Activated naive CD4-positive, alpha-beta T cell treated with anti-CD3 and anti-CD28 coated beads for 36 hours (primary cell): ENCODE measurements at regions of chr3 and their contacts with region 1.

Region 1: GRCh38 chr3:180679178-180680096 is at the start of gene CCDC39:
- DNase-seq: peak; percentile 74
- H3K4me3 Mint-ChIP-seq: peak within 1 kb of the TSS; percentile 83
- H3K27ac Mint-ChIP-seq: no peak within 1 kb of the TSS
- H3K4me1 Mint-ChIP-seq: peaks cover 11% of the 10 kb centered on the region
- H3K27me3 Mint-ChIP-seq: peaks cover 40% of the 10 kb centered on the region
- total RNA-seq, gene CCDC39: not detected

Region 2: DNA sequence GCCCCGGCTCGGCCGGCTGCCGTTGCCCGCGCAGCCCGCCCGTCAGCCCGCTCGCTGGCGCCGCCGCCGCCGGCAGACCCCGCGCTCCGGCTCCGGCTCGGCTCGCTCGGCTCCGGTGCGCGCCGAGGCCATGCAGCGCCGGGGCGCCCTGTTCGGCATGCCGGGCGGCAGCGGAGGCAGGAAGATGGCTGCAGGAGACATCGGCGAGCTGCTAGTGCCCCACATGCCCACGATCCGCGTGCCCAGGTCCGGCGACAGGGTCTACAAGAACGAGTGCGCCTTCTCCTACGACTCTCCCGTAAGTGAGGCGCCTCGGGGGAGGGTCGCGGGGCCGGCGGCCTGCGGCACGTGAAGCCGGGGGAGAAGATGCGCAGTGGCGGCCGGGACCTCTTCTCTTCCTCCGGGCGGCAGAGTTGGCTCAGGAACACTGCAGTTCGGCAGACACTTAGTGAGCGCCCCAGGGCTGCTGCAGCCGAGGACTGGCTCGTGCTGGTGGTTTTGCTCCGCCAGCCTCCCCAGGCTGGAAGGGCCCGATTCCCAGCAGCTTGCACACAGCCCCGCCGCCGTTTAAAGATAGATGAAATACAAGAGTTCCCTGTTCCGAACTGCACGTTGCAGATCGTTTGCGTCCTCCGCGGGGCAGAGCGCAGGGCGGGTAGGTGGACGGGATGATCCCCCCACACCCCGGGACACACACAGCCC is 1026.2 kb before region 1 on chr3:
- CTCF ChIA-PET with region 1: no interaction called
- intact Hi-C with region 1: loop called (anchors 5 kb)
- DNase-seq: peak; percentile 72
- H3K4me3 Mint-ChIP-seq: peak overlapping the region; percentile 85
- H3K27ac Mint-ChIP-seq: peak overlapping the region; percentile 67
- H3K4me1 Mint-ChIP-seq: peaks cover 17% of the 10 kb centered on the region
- H3K27me3 Mint-ChIP-seq: peaks cover 8% of the 10 kb centered on the region

Region 3: GRCh38 chr3:179695672-179696313 is 983.6 kb before region 1 on chr3:
- CTCF ChIA-PET with region 1: no interaction called
- intact Hi-C with region 1: no loop called
- DNase-seq: no peak
- H3K4me3 Mint-ChIP-seq: no peak overlapping the region
- H3K27ac Mint-ChIP-seq: no peak overlapping the region
- H3K4me1 Mint-ChIP-seq: no peaks in the 10 kb centered on the region
- H3K27me3 Mint-ChIP-seq: no peaks in the 10 kb centered on the region

Region 4: GRCh38 chr3:180416111-180416594 is 263.3 kb before region 1 on chr3:
- CTCF ChIA-PET with region 1: no interaction called
- intact Hi-C with region 1: no loop called
- DNase-seq: no peak
- H3K4me3 Mint-ChIP-seq: no peak overlapping the region
- H3K27ac Mint-ChIP-seq: no peak overlapping the region
- H3K4me1 Mint-ChIP-seq: no peaks in the 10 kb centered on the region
- H3K27me3 Mint-ChIP-seq: no peaks in the 10 kb centered on the region

Region 5: GRCh38 chr3:180626844-180627243 is 52.6 kb before region 1 on chr3:
- CTCF ChIA-PET with region 1: no interaction called
- intact Hi-C with region 1: loop called (anchors 2 kb)
- DNase-seq: peak; percentile 20
- H3K4me3 Mint-ChIP-seq: no peak overlapping the region
- H3K27ac Mint-ChIP-seq: peak overlapping the region; percentile 18
- H3K4me1 Mint-ChIP-seq: peaks cover 41% of the 10 kb centered on the region
- H3K27me3 Mint-ChIP-seq: no peaks in the 10 kb centered on the region

Region 6: DNA sequence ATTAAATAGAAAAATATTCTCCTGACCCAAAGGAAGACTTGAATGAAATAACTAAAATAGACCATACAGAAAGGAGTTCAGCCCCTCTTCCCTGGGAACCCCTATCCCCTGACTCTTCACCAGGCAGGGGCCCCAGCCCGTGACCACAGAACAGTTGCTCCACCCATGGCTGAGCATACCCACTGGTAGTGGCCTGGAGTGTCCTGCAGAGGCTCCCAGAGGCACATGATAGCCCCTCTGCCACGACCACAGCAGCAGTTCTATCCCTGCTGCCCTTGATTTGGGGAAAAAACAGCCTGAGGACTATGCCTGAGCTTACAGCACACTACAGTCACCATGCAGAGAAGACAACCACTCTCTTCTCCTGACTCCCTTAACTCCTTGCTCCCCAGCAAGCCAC is 45.7 kb before region 1 on chr3:
- CTCF ChIA-PET with region 1: no interaction called
- intact Hi-C with region 1: loop called (anchors 2 kb)
- DNase-seq: no peak
- H3K4me3 Mint-ChIP-seq: no peak overlapping the region
- H3K27ac Mint-ChIP-seq: no peak overlapping the region
- H3K4me1 Mint-ChIP-seq: peaks cover 15% of the 10 kb centered on the region
- H3K27me3 Mint-ChIP-seq: peaks cover 41% of the 10 kb centered on the region